K562 (cell line): ENCODE measurements at regions of chr12 and their contacts with region 1.

Region 1: DNA sequence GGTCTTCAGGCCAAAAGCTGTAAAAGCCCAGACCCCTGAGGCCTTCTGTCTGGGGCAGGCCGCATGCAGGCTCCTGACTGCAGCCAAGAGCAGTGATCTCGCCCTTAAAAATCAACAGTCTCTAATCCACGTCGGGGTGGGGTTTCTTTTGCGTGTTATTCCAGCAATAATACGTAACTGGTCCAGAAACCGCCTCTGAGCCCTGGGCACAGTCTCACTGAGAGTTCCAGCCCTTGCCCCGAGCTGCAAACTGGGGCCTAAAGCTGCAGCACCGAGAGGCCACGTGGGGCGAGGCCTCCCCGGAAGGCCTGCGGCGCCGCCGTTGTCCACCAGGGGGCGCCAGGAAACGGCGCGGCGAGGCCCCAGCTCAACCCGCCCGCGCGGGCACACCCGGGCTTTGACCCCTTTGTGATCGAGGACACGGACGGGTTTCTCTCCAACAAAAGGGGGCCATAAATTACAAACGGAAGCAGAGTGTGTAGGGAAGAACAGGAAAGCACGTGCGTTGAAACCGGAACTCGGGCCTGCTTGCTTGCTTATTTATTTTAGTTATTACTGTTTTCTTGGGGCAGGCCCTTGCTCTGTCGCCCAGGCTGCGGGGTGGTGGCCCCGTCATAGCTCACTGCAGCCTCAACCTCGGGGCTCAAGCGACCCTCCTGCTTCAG is 87.2 kb downstream of the NINJ2 start:
- DNase-seq: peak; percentile 84 to 86 (median 85)
- ATAC-seq: peak; percentile 94
- H3K4me3 ChIP-seq: no peak overlapping the region
- H3K27ac ChIP-seq: peak overlapping the region; percentile 77
- H3K4me1 ChIP-seq: peaks cover 36 to 42% of the 10 kb centered on the region in 2 experiments; a peak in 4 of 5 replicates
- H3K27me3 ChIP-seq: no peaks in the 10 kb centered on the region
- CTCF ChIP-seq: peak; percentile 81 to 89 (median 89)
- EP300 ChIP-seq: no peak
- POLR2A ChIP-seq: peak; percentile 34; the same call in 1 of the 2 replicates
- RAD21 ChIP-seq: peak; percentile 91 to 94

Region 2: GRCh38 chr12:450438-450837 is 125.6 kb before region 1 on chr12:
- CTCF ChIA-PET with region 1: no interaction called
- POLR2A ChIA-PET with region 1: no interaction called
- in situ Hi-C with region 1: no loop called
- intact Hi-C with region 1: no loop called
- DNase-seq: peak; percentile 18 to 49 (median 30)
- ATAC-seq: peak; percentile 69; the same call in 2 of the 3 replicates
- H3K4me3 ChIP-seq: no peak overlapping the region
- H3K27ac ChIP-seq: no peak overlapping the region
- H3K4me1 ChIP-seq: peaks cover 0 to 11% of the 10 kb centered on the region in 2 experiments; a peak in 2 of 5 replicates
- H3K27me3 ChIP-seq: peaks cover 2 to 9% of the 10 kb centered on the region in 2 experiments; a peak in 1 of 5 replicates
- CTCF ChIP-seq: no peak
- EP300 ChIP-seq: peak; percentile 34; the same call in 1 of the 2 replicates
- POLR2A ChIP-seq: no peak
- RAD21 ChIP-seq: no peak

Region 3: DNA sequence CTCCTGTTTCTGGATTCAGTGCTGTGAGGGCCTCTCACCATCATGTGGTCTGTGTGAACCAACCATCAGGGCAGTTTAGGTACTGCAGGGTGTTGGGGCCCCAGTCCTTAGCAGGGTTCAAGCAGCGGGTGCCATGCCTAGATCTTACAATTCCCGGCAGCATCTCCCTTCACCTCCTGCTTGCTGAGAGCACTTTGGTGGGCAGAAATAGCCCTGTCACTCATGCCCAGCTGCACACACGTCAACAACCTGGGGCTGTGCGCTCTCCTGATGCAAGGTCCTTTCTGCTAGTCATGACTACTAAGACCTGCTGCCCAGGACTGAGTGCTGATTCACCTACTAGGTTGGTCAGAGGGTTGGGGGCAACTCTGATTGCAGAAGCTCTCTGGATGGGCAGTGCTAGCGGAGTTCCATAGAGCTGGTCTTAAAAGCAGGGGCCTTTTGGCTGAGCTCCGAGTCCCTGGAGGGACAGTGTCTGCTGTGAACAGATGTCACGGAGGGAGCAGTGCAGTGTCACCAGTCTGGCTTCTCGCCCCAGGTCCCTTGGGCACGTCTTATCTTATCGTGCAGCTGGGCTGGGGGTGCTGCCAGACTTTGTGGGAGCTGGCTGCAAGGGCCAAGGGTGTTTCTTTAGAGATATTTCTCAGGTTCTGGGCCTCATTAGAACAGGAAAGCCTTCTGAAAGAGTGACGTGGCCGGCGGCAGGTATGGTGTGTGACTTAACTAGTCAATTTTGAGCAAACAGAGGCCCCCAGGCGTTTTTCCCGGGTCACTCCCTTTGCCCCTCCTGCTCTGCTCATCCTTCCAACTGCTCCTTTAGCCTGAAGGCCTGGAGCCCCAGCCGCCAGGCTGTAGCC is 15.3 kb after region 1 on chr12:
- CTCF ChIA-PET with region 1: no interaction called
- POLR2A ChIA-PET with region 1: interaction called, 16 read pairs
- in situ Hi-C with region 1: no loop called
- intact Hi-C with region 1: no loop called
- DNase-seq: peak; percentile 91 to 96 (median 94)
- ATAC-seq: peak; percentile 91
- H3K4me3 ChIP-seq: peak overlapping the region; percentile 23; the same call in 1 of the 2 replicates
- H3K27ac ChIP-seq: peak overlapping the region; percentile 96
- H3K4me1 ChIP-seq: peaks cover 40 to 42% of the 10 kb centered on the region in 2 experiments; a peak in 4 of 5 replicates
- H3K27me3 ChIP-seq: no peaks in the 10 kb centered on the region
- CTCF ChIP-seq: peak in 2 of 3 experiments; percentile 21 to 36; a peak in 1 of 6 replicates
- EP300 ChIP-seq: peak; percentile 92
- POLR2A ChIP-seq: no peak
- RAD21 ChIP-seq: peak in 1 of 2 experiments; percentile 15; a peak in 1 of 4 replicates

Region 4: DNA sequence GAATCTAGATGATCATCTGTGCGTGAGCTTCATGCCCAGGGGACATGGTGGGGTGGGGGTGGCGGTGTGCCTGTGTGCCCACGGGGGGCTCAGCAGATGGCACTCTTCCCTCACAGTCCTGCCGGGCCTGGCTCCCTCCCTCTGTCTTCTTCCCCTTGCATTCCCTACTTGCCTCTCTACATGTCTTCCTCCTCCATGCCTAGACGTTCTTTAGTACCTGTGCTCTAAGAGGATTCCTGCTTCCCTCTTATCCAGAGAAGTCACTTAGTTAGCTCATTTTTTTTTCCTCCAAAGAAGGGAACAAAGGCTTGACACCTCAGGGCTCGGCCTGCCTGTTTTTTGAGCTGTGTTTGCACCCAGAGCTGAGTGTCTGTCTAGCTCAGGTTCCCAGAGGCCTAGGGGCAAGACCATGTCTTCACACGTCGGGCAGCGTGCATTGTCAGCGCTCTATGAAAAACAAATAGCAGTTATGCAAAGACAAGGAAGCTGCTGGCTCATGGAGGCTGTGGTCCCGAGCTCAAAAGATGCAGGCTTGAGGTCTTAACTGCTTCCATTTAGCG is 38.4 kb after region 1 on chr12:
- CTCF ChIA-PET with region 1: no interaction called
- POLR2A ChIA-PET with region 1: no interaction called
- in situ Hi-C with region 1: no loop called
- intact Hi-C with region 1: loop called (anchors 5 kb)
- DNase-seq: no peak
- ATAC-seq: peak; percentile 59; the same call in 2 of the 3 replicates
- H3K4me3 ChIP-seq: no peak overlapping the region
- H3K27ac ChIP-seq: no peak overlapping the region
- H3K4me1 ChIP-seq: peaks cover 5 to 8% of the 10 kb centered on the region in 2 experiments; a peak in 4 of 5 replicates
- H3K27me3 ChIP-seq: no peaks in the 10 kb centered on the region
- CTCF ChIP-seq: peak; percentile 16 to 23 (median 20); a peak in 1 of 6 replicates
- EP300 ChIP-seq: no peak
- POLR2A ChIP-seq: no peak
- RAD21 ChIP-seq: peak; percentile 22 to 50; a peak in 3 of 4 replicates

Region 5: DNA sequence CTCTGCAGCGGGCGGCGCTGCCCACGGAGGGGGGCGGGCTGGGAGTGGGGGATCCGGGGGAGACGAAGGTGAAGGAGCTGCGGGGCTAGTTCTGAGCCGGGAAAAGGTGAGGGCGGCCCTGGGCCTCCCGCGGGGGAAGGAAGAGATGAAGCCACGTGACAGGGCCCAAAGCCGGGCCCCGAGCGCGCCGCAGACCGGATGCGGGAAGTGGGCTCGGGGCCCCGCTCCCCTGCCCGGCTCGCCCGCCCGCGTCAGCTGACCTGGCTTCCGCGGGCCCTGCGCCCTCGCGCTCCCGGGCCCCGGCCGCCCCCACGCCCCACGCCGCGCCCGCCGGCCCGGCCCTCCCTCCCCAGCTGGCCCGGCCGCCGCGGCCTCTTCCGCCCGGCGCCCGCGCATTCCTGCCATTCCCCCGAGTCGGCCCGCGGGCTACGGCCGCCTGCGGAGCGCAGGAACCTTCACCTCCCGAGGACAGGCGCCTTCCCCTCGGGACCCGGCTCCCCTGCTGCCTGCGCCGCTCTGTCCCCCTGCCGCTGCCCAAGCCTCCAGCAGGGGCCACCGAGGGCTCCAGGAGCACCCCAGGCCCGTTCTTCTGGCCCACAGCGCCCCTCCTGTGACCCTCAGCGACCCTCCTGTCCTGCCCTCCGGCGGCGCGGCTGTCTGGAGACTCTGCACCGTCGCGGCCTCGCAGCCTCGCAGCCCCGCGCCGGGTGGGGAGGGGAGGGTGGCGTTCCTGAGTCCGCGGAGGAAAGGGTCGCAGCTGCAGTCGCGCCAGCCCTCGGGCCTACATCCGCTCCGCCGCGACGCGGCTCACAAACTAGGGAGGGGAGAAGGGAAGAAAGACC is 66.8 kb after region 1 on chr12:
- CTCF ChIA-PET with region 1: no interaction called
- POLR2A ChIA-PET with region 1: interaction called, 4 read pairs
- in situ Hi-C with region 1: no loop called
- intact Hi-C with region 1: loop called (anchors 5 kb)
- DNase-seq: peak; percentile 79 to 92 (median 88)
- ATAC-seq: peak; percentile 74
- H3K4me3 ChIP-seq: peak overlapping the region; percentile 51
- H3K27ac ChIP-seq: peak overlapping the region; percentile 91
- H3K4me1 ChIP-seq: peaks cover 36 to 45% of the 10 kb centered on the region in 2 experiments
- H3K27me3 ChIP-seq: no peaks in the 10 kb centered on the region
- CTCF ChIP-seq: peak; percentile 37 to 80 (median 43); a peak in 4 of 6 replicates
- EP300 ChIP-seq: no peak
- POLR2A ChIP-seq: peak; percentile 63
- RAD21 ChIP-seq: peak in 1 of 2 experiments; percentile 25; a peak in 3 of 4 replicates

Region 6: DNA sequence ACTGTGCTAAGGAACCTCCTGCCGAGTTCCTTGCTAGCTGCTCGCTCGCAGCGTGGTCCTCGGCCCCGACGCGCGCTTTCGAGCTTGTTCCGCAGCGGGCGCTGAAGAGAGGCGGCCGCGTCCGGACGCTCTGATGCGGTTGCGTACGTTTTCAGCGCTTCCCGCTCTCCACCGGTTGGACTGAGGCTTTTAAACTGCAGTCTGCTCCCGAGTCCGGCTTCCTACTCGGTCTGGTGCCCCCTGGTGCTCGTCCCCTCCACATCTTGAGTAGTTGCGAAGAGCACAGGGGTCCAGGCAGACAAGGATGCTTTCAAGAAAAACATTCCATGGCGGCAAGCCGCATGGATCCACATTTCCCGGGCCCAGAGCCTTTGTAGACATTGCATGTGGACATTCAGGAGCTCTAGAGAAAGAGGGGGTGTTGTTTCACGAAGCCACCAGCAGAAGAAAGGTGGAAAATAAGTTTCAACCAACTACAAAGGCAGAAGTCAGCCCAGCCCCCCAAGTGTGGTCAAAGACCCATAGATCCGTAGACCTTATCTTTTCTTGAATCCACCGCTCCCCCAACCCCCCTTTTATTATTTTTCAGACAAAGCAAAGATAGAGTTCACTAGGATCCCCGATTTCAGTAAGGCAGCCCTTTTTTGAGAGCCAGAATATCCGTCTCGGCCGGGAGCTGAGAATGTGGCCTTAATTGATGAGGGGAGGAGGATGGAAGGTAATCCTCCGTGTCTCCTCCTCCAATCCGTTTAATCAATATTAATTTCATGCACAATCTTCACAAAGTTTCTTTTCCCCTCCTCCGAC is 175.3 kb after region 1 on chr12:
- CTCF ChIA-PET with region 1: interaction called, 20 read pairs
- POLR2A ChIA-PET with region 1: interaction called, 3 read pairs
- in situ Hi-C with region 1: loop called (anchors 5 kb)
- intact Hi-C with region 1: loop called (anchors 2 kb)
- DNase-seq: peak; percentile 67 to 96 (median 74)
- ATAC-seq: peak; percentile 70
- H3K4me3 ChIP-seq: peak overlapping the region; percentile 61
- H3K27ac ChIP-seq: peak overlapping the region; percentile 84
- H3K4me1 ChIP-seq: peaks cover 8 to 20% of the 10 kb centered on the region in 2 experiments; a peak in 4 of 5 replicates
- H3K27me3 ChIP-seq: no peaks in the 10 kb centered on the region
- CTCF ChIP-seq: peak; percentile 72 to 80 (median 74)
- EP300 ChIP-seq: peak; percentile 50
- POLR2A ChIP-seq: peak; percentile 78; the same call in 1 of the 2 replicates
- RAD21 ChIP-seq: peak; percentile 69 to 78

Region 7: DNA sequence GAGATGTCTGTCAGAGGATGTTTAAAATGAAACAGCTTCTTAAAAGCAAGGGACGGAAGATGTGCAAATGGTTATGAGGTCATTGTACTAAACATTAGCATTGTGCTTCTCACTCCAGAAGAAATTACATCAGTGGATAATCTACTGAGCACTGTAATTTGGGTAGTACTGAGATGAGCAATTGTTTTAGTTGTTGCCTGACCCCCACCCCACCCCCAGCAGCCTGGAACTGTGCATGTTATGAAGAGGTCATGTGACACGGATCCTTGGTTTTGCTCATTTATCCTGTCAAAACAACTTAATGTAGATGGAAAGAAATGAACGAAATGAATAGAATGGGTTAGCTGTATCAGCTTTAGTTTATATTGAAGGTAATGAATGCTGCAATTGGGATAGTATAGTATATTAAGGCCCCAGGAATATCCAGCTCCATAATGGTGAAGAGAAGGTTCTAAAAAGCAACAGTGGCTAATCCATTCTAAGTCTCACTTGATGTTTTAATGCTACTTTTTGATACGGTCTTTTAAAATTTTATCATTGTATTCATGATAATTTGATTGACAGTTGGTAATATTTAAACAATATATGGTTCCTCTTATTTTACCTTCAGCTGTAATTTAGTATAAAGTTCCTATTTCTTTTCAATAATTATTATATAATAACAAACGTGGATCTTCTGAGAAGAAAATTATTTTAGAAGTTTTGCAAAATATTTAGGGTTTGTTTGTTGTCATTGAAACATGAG is 234.8 kb after region 1 on chr12:
- CTCF ChIA-PET with region 1: interaction called, 9 read pairs
- POLR2A ChIA-PET with region 1: no interaction called
- in situ Hi-C with region 1: no loop called
- intact Hi-C with region 1: loop called (anchors 5 kb)
- DNase-seq: peak in 1 of 4 experiments; percentile 7
- ATAC-seq: peak; percentile 70
- H3K4me3 ChIP-seq: no peak overlapping the region
- H3K27ac ChIP-seq: no peak overlapping the region
- H3K4me1 ChIP-seq: peaks cover 2 to 3% of the 10 kb centered on the region in 2 experiments; a peak in 3 of 5 replicates
- H3K27me3 ChIP-seq: no peaks in the 10 kb centered on the region
- CTCF ChIP-seq: no peak
- EP300 ChIP-seq: no peak
- POLR2A ChIP-seq: no peak
- RAD21 ChIP-seq: no peak

Region 8: GRCh38 chr12:1605129-1606020 is 1029.3 kb after region 1 on chr12:
- CTCF ChIA-PET with region 1: no interaction called
- POLR2A ChIA-PET with region 1: no interaction called
- in situ Hi-C with region 1: no loop called
- intact Hi-C with region 1: loop called (anchors 10 kb)
- DNase-seq: peak; percentile 53 to 89 (median 63)
- ATAC-seq: peak; percentile 80
- H3K4me3 ChIP-seq: peak overlapping the region; percentile 23
- H3K27ac ChIP-seq: peak overlapping the region; percentile 87
- H3K4me1 ChIP-seq: peaks cover 30% of the 10 kb centered on the region in 2 experiments; a peak in 4 of 5 replicates
- H3K27me3 ChIP-seq: no peaks in the 10 kb centered on the region
- CTCF ChIP-seq: peak; percentile 71 to 87 (median 75)
- EP300 ChIP-seq: no peak
- POLR2A ChIP-seq: no peak; the same call in 1 of the 2 replicates
- RAD21 ChIP-seq: peak; percentile 66 to 79